ENCODE measurements at regions of chr9 and their contacts with region 1.

Region 1: GRCh38 chr9:75148561-75148960 is 60.2 kb downstream of the OSTF1 start:
- DNase-seq: no peak
- H3K4me3 Mint-ChIP-seq: peak overlapping the region; percentile 30
- H3K27ac Mint-ChIP-seq: peak overlapping the region; percentile 87
- H3K4me1 Mint-ChIP-seq: peaks cover 75% of the 10 kb centered on the region
- H3K27me3 Mint-ChIP-seq: no peaks in the 10 kb centered on the region

Region 2: GRCh38 chr9:73149371-73150067 is 1999.0 kb before region 1 on chr9:
- intact Hi-C with region 1: loop called (anchors 2 kb)
- DNase-seq: no peak
- H3K4me3 Mint-ChIP-seq: peak overlapping the region; percentile 20
- H3K27ac Mint-ChIP-seq: peak overlapping the region; percentile 76
- H3K4me1 Mint-ChIP-seq: peaks cover 63% of the 10 kb centered on the region
- H3K27me3 Mint-ChIP-seq: no peaks in the 10 kb centered on the region

Region 3: DNA sequence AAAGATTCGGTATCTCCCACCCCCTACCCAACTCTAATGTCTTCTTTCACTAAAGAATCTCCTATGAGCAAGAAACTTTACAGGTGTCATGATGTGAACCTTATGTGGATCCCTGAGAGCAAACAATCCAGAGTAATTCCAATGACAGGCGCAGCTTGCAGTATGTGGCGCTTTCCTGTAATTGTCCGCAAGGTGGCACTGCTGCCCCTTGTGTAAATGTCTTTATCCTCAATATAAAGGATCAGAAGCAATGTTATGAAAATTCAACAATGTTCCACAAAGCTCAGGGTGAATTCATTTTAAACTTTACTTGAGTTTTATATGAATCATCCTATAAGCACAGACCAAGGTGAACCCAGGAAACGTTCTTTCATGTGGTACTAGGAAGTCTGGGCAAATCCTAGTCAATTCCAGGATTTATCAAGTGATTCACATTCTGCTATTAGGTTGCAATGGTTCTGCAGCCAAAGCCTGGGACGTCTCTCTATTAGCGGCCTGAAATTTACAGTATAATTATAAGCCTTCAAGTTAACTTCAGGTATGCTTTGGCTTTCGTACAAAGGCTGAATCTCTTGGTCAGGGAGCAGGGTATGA is 374.6 kb before region 1 on chr9:
- intact Hi-C with region 1: loop called (anchors 5 kb)
- DNase-seq: peak; percentile 55
- H3K4me3 Mint-ChIP-seq: no peak overlapping the region
- H3K27ac Mint-ChIP-seq: no peak overlapping the region
- H3K4me1 Mint-ChIP-seq: peaks cover 16% of the 10 kb centered on the region
- H3K27me3 Mint-ChIP-seq: peaks cover 6% of the 10 kb centered on the region

Region 4: DNA sequence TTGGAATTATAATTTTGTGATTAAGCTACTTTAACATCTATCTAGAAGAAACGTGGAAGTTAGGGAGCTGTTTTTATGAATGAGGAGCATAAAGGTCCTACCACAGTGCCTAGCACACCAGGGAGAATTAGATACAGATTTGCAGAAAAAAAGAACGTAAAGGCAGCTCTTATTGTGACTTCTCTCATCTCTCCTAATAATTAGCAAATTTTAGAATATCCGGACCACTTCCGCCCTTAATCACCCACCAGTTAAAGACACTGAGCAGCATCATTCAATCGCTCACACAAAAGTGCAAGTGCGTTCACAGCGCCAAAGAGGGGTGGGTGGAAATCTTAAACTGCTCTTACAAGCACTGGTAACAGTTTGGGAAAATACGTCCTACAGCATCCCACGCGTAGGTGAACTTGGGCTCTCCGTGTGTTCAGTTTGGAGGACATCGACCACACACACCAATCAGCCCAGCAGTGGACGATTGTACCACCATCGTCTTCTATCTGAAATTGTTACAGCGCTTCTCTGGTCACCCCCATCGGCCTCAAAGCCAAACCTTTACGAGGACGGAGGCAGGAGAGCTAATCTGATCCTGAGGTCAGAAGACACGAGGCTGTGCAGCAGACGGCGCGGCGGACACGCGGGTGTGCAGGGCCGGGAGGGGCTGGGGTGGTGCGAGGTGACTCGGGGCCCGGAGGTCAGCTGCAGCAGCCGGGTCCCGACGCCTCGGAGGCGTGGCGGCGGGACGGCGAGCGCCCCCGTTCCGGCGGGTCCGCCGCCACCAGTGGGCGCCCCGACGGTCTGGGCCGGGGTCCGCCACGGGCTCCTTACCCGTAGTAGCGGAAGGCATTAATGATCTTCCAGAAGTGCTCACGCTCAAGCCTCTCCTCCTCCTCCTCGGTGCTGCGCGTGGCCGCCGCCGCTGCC is 121.1 kb before region 1 on chr9:
- intact Hi-C with region 1: loop called (anchors 1 kb)
- DNase-seq: peak; percentile 48
- H3K4me3 Mint-ChIP-seq: peak overlapping the region; percentile 95
- H3K27ac Mint-ChIP-seq: peak overlapping the region; percentile 98
- H3K4me1 Mint-ChIP-seq: peaks cover 45% of the 10 kb centered on the region
- H3K27me3 Mint-ChIP-seq: peaks cover 3% of the 10 kb centered on the region

Region 5: GRCh38 chr9:75117564-75117963 is 31.0 kb before region 1 on chr9:
- intact Hi-C with region 1: loop called (anchors 1 kb)
- DNase-seq: no peak
- H3K4me3 Mint-ChIP-seq: no peak overlapping the region
- H3K27ac Mint-ChIP-seq: peak overlapping the region; percentile 74
- H3K4me1 Mint-ChIP-seq: peaks cover 54% of the 10 kb centered on the region
- H3K27me3 Mint-ChIP-seq: no peaks in the 10 kb centered on the region

Region 6: DNA sequence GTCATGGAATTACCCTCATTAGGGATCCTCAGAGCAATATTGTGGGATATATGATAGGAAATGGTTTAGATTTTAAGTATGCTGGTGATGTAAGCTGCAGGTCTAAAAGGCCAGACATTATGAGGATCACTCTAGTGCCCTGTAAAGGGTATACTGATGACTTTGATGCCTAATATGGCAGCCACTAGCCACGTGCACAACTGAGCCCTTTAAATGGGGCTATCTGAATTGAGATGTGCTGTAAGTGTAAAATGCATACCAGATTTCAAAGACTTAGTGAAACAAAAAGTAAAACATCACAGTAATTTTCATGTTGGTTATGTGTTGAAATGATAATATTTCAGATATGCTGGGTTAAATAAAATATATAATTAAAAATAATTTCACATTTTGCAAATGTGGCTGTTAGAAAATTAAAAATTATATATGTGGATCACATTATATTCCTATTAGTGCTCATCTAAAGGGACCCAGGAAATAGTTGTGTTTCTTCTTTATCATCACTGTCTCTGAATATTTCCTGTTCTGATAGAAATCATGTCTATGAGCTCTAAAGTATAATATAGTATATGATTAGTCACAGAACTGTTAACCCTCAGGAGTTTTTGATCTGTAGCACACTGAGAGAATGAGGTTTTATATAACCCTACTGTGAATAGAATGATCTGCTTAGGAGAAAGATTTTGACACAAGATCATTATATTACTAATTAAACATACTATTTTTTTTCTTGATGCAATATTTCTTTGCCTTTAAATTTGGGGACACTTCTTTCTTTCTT is 10.1 kb before region 1 on chr9:
- intact Hi-C with region 1: loop called (anchors 1 kb)
- DNase-seq: no peak
- H3K4me3 Mint-ChIP-seq: no peak overlapping the region
- H3K27ac Mint-ChIP-seq: peak overlapping the region; percentile 66
- H3K4me1 Mint-ChIP-seq: peaks cover 48% of the 10 kb centered on the region
- H3K27me3 Mint-ChIP-seq: no peaks in the 10 kb centered on the region

Region 7: GRCh38 chr9:75185585-75186170 is 37.1 kb after region 1 on chr9:
- intact Hi-C with region 1: loop called (anchors 5 kb)
- DNase-seq: peak; percentile 14
- H3K4me3 Mint-ChIP-seq: no peak overlapping the region
- H3K27ac Mint-ChIP-seq: no peak overlapping the region
- H3K4me1 Mint-ChIP-seq: peaks cover 21% of the 10 kb centered on the region
- H3K27me3 Mint-ChIP-seq: peaks cover 2% of the 10 kb centered on the region